ENCODE measurements at regions of chr11 and their contacts with region 1.

Region 1: DNA sequence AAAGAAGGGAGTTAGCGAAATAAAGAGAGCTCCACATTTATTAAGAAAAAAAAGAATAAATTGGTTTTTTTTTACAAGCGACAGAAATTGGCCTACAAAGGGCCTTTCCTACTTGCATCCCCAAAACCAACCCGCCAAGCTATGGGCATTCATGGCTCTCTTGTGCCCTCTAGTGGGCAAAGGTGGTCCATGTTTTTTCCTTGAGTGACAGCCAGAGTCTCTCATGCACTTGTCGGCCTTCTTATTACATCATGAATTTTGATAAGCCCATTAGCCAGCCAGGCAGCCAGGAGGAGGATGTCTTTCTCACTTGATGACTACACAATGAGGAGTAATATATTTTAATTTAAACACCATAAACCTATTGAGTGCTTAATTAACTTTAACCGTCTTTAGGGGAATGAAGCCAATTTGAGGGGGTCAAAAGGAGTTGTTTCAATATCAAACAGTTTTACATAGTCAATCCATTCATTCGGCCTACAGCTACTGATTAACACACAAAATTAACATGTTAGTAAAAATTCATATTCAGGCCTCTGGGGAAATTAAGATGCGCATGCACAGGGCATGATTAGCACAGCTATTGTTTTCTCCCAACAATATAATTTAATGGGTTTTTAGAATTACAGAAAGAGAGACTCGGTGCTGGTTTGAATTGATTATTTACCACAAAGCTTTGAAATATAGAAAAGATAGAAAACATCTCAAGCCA is 85.5 kb downstream of the RCN1 start:
- H3K4me3 ChIP-seq: no peak overlapping the region
- H3K27ac ChIP-seq: no peak overlapping the region
- H3K4me1 ChIP-seq: no peaks in the 10 kb centered on the region
- CTCF ChIP-seq: 0 out of 2 replicates have a peak, but pooled peaks have one; percentile 36

Region 2: GRCh38 chr11:31107062-31107461 is 1069.3 kb before region 1 on chr11:
- CTCF ChIA-PET with region 1: interaction called, 12 read pairs
- POLR2A ChIA-PET with region 1: no interaction called
- H3K4me3 ChIP-seq: no peak overlapping the region
- H3K27ac ChIP-seq: no peak overlapping the region
- H3K4me1 ChIP-seq: no peaks in the 10 kb centered on the region
- CTCF ChIP-seq: peak; percentile 58; the same call in 1 of the 2 replicates

Region 3: DNA sequence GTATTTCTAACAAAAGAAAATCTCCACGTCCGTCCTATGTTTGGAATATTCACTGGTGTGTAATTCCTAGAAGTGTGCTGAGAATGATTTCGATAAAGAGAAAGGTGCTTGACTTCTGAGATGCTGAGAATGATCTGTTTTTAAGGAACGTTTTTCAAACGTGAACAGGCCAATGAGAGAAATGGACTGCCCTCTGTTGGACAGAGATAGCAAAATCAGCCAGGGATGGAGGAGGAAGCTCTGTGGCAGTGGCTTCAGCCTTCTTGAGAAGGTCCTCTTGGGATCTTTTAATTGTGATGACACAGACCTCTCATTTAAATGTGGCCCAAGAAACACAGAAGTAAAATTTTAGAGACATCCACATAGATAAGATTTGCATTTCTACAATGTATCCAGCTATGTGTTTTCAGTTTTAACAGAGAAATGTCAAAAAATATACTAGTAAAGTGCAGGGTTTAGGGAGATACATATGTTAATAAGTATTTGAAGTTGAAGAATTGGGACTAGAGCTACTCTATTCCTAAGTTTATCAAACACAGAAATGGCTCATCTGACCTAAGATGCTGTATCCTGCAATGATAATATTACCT is 169.5 kb before region 1 on chr11:
- CTCF ChIA-PET with region 1: interaction called, 13 read pairs
- POLR2A ChIA-PET with region 1: no interaction called
- H3K4me3 ChIP-seq: no peak overlapping the region
- H3K27ac ChIP-seq: no peak overlapping the region
- H3K4me1 ChIP-seq: no peaks in the 10 kb centered on the region
- CTCF ChIP-seq: no peak

Region 4: DNA sequence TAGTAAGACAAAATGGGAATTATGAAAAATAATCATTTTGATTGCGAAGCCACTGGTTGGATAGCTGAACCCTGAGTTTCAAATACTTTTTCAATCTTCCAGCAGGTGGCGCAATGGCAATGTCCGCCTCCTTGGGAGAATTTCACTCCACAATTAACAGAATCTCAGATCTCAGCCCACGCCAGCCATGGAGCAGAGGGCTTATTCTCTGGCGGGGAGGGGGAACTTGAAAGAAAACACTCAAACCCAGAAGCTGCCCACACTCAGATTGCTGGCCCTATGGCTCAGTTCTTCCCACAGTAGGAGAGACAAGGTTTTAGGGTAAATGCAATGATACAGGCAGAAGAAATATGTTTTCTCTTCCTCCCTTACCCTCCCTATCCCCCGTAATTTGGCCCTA is 124.2 kb before region 1 on chr11:
- CTCF ChIA-PET with region 1: interaction called, 120 read pairs
- POLR2A ChIA-PET with region 1: no interaction called
- H3K4me3 ChIP-seq: no peak overlapping the region
- H3K27ac ChIP-seq: no peak overlapping the region
- H3K4me1 ChIP-seq: no peaks in the 10 kb centered on the region
- CTCF ChIP-seq: no peak

Region 5: GRCh38 chr11:32231905-32232493 is 55.6 kb after region 1 on chr11:
- CTCF ChIA-PET with region 1: interaction called, 14 read pairs
- POLR2A ChIA-PET with region 1: no interaction called
- H3K4me3 ChIP-seq: no peak overlapping the region
- H3K27ac ChIP-seq: no peak overlapping the region
- H3K4me1 ChIP-seq: no peaks in the 10 kb centered on the region
- CTCF ChIP-seq: no peak

Region 6: DNA sequence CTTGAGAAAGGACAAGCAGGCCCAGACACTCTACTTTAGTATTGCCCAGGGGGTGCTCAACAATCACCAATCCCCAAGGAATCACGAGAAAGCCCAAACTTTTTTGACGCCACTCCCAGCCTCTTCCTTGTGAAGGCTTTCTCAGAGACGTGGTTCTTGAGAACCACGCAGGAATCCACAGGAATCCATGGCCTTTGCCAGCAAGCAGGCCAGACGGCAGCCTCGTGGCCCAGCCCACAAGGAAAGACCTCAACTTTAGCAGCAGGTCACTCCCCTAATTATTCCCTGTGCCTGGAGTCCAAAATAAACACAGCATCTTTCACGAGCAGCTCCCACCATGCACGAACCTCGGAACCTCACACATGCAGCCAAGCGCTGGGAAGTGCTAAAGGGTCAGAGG is 154.7 kb after region 1 on chr11:
- CTCF ChIA-PET with region 1: no interaction called
- POLR2A ChIA-PET with region 1: no interaction called
- H3K4me3 ChIP-seq: no peak overlapping the region
- H3K27ac ChIP-seq: no peak overlapping the region
- H3K4me1 ChIP-seq: no peaks in the 10 kb centered on the region
- CTCF ChIP-seq: no peak

Region 7: GRCh38 chr11:32478277-32478731 is 301.9 kb after region 1 on chr11:
- CTCF ChIA-PET with region 1: no interaction called
- POLR2A ChIA-PET with region 1: no interaction called
- H3K4me3 ChIP-seq: no peak overlapping the region
- H3K27ac ChIP-seq: no peak overlapping the region
- H3K4me1 ChIP-seq: 0 out of 2 replicates have a peak, but pooled peaks cover 3% of the 10 kb centered on the region
- CTCF ChIP-seq: no peak

Measured in HEK293 (cell line).